ENCODE measurements at regions of chr5 and their contacts with region 1.

Region 1: GRCh38 chr5:23419115-23419514 is 88.3 kb upstream of the PRDM9 start:
- DNase-seq: no peak
- ATAC-seq: no peak
- H3K4me3 ChIP-seq: no peak overlapping the region
- H3K27ac ChIP-seq: no peak overlapping the region
- H3K4me1 ChIP-seq: no peaks in the 10 kb centered on the region
- H3K27me3 ChIP-seq: no peaks in the 10 kb centered on the region
- CTCF ChIP-seq: no peak
- EP300 ChIP-seq: no peak
- POLR2A ChIP-seq: no peak
- RAD21 ChIP-seq: no peak

Region 2: DNA sequence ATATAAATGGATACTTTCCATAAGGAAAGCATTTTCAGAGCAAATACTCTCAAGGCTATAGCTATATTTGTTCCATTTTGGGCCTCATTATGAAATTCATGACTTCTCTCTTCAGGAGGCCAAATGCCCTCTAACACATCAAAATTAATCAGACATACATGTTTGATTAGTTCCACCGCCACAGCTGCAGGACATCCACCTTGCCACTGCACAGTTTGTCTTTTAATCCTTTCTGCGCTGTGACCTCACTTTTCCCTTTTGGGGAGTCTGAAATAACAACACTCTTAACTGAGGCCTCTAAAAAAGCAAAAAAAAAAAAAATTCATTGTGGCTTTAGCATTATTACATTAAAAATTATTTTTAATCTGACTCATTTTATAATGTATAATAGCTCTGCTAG is 286.9 kb before region 1 on chr5:
- CTCF ChIA-PET with region 1: no interaction called
- POLR2A ChIA-PET with region 1: no interaction called
- in situ Hi-C with region 1: no loop called
- intact Hi-C with region 1: no loop called
- DNase-seq: no peak
- ATAC-seq: no peak
- H3K4me3 ChIP-seq: no peak overlapping the region
- H3K27ac ChIP-seq: no peak overlapping the region
- H3K4me1 ChIP-seq: no peaks in the 10 kb centered on the region
- H3K27me3 ChIP-seq: no peaks in the 10 kb centered on the region
- CTCF ChIP-seq: no peak
- EP300 ChIP-seq: no peak
- POLR2A ChIP-seq: no peak
- RAD21 ChIP-seq: no peak

Region 3: DNA sequence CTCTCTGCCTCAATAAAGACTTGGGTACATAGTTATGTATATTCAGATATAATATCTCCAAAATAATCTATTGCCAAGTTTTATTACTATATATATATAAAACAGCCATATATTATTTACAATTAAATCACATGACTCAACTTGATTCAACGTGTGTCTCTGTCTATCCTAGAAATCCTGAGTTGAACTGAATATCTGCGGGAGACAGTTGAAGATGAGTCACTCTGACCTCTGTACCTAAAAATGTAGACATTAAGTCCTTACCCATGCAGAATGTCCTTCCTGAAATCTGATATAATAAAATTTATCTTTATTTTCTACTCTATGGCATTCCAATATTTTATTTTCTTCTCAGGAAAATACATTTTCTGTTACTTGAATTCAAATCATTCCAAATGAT is 130.0 kb before region 1 on chr5:
- CTCF ChIA-PET with region 1: no interaction called
- POLR2A ChIA-PET with region 1: no interaction called
- in situ Hi-C with region 1: no loop called
- intact Hi-C with region 1: no loop called
- DNase-seq: no peak
- ATAC-seq: no peak
- H3K4me3 ChIP-seq: no peak overlapping the region
- H3K27ac ChIP-seq: no peak overlapping the region
- H3K4me1 ChIP-seq: no peaks in the 10 kb centered on the region
- H3K27me3 ChIP-seq: no peaks in the 10 kb centered on the region
- CTCF ChIP-seq: no peak
- EP300 ChIP-seq: no peak
- POLR2A ChIP-seq: no peak
- RAD21 ChIP-seq: no peak

Region 4: GRCh38 chr5:23396346-23396745 is 22.8 kb before region 1 on chr5:
- CTCF ChIA-PET with region 1: no interaction called
- POLR2A ChIA-PET with region 1: no interaction called
- in situ Hi-C with region 1: no loop called
- intact Hi-C with region 1: loop called (anchors 1 kb)
- DNase-seq: no peak
- ATAC-seq: no peak
- H3K4me3 ChIP-seq: no peak overlapping the region
- H3K27ac ChIP-seq: no peak overlapping the region
- H3K4me1 ChIP-seq: no peaks in the 10 kb centered on the region
- H3K27me3 ChIP-seq: no peaks in the 10 kb centered on the region
- CTCF ChIP-seq: no peak
- EP300 ChIP-seq: no peak
- POLR2A ChIP-seq: no peak
- RAD21 ChIP-seq: no peak

Region 5: DNA sequence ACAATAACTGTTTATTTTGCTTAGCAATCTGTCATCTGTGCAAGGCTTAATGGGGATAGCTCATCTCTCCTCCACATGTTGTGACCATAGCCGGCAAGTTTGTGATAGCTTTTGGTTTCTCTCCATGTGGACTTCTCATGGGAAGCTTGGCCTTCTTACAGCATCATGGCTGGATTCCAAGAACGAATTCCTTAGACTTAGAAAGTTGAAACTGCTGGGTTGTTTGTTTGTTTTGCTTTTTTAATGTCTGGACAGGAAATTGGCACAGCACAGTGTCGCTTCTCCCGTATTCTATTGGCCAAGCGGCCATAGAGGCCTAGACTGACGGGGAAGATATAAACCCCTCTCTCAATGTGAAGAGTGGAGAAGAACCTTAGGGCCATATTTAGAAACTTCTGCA is 27.3 kb after region 1 on chr5:
- CTCF ChIA-PET with region 1: no interaction called
- POLR2A ChIA-PET with region 1: no interaction called
- in situ Hi-C with region 1: no loop called
- intact Hi-C with region 1: no loop called
- DNase-seq: no peak
- ATAC-seq: no peak
- H3K4me3 ChIP-seq: no peak overlapping the region
- H3K27ac ChIP-seq: no peak overlapping the region
- H3K4me1 ChIP-seq: no peaks in the 10 kb centered on the region
- H3K27me3 ChIP-seq: no peaks in the 10 kb centered on the region
- CTCF ChIP-seq: no peak
- EP300 ChIP-seq: no peak
- POLR2A ChIP-seq: no peak
- RAD21 ChIP-seq: no peak